Endothelial cell of umbilical vein (primary cell): ENCODE measurements at regions of chr7 and their contacts with region 1.

Region 1: GRCh38 chr7:104848138-104848990 is 165.6 kb upstream of the KMT2E start:
- DNase-seq: peak; percentile 62
- H3K4me3 ChIP-seq: no peak overlapping the region
- H3K27ac ChIP-seq: no peak overlapping the region
- H3K4me1 ChIP-seq: no peaks in the 10 kb centered on the region
- H3K27me3 ChIP-seq: peaks cover 6 to 13% of the 10 kb centered on the region in 2 experiments
- CTCF ChIP-seq: peak; percentile 79 to 81
- POLR2A ChIP-seq: no peak

Region 2: GRCh38 chr7:104272767-104273384 is 575.5 kb before region 1 on chr7:
- CTCF ChIA-PET with region 1: interaction called, 3 read pairs
- POLR2A ChIA-PET with region 1: no interaction called
- dilution Hi-C with region 1: no loop called
- intact Hi-C with region 1: loop called (anchors 1 kb)
- DNase-seq: peak; percentile 55
- H3K4me3 ChIP-seq: no peak overlapping the region
- H3K27ac ChIP-seq: no peak overlapping the region
- H3K4me1 ChIP-seq: no peaks in the 10 kb centered on the region
- H3K27me3 ChIP-seq: peaks cover 1 to 3% of the 10 kb centered on the region in 2 experiments
- CTCF ChIP-seq: peak; percentile 27 to 44
- POLR2A ChIP-seq: no peak

Region 3: DNA sequence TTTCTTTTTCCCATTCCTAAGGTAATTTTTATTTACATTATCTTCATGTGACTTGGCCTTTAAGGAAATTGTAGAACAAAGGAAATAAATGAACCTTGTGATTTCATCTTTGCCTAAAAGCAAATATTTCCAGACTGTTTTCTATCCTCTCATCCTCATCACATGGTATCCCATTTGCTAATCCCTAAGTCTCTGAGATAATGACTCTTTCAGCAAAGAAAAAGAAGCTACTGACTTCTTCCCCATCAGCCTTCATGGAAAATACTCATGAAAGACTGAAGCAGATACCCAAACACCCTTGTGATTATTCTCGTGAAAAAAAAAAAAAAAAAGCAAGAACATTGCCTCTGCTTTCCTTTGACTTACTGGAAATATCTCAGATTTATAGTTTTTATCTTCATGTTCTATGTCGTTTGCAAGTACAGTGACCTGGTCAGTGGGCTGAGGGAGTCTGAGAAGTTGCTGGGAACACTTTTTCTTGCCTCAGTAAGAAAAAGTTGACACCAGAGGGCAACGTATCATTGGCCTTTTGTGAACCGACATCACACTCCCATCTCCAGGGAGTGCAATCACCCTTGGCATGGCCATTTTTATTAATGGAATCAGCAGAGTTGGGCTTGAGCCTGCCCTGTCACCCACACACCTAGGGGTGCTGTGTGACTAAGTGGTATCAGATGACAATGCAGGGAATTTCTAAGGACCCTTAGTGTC is 80.4 kb before region 1 on chr7:
- CTCF ChIA-PET with region 1: interaction called, 21 read pairs
- POLR2A ChIA-PET with region 1: no interaction called
- dilution Hi-C with region 1: no loop called
- intact Hi-C with region 1: loop called (anchors 1 kb)
- DNase-seq: no peak
- H3K4me3 ChIP-seq: no peak overlapping the region
- H3K27ac ChIP-seq: no peak overlapping the region
- H3K4me1 ChIP-seq: no peaks in the 10 kb centered on the region
- H3K27me3 ChIP-seq: peaks cover 4 to 5% of the 10 kb centered on the region in 2 experiments
- CTCF ChIP-seq: peak in 1 of 2 donors; percentile 14
- POLR2A ChIP-seq: no peak

Region 4: DNA sequence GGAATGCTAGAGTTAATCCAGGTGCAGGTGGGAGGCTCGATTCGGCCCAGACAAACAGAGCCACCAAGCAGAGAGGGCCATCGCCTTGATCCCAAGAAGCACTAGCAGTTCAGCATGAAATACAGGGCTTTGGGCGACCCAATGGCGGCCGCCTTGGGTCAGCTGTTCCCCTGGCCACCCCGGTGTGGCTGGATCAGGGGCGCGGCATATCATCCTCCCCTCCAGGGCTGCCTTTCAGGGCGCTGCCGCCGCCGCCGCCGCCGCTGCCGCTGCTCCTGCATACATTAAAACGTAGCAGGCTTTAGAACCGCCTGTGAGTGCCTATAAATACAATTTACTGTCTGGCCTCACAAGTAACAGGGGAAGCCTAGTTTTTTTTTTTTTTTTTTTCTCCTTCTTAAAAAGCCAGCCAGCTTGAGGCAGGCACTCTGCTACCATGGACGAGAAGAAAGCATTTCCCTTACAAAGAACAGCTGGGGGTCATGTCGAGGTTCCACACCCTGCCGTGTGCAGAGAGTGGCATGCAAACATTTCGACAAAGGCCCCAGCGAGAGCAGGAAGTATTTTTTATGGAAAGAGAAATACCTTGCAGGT is 790.6 kb after region 1 on chr7:
- CTCF ChIA-PET with region 1: no interaction called
- POLR2A ChIA-PET with region 1: no interaction called
- dilution Hi-C with region 1: no loop called
- intact Hi-C with region 1: no loop called
- DNase-seq: no peak
- H3K4me3 ChIP-seq: no peak overlapping the region
- H3K27ac ChIP-seq: no peak overlapping the region
- H3K4me1 ChIP-seq: no peaks in the 10 kb centered on the region
- H3K27me3 ChIP-seq: no peaks in the 10 kb centered on the region
- CTCF ChIP-seq: no peak
- POLR2A ChIP-seq: no peak